ENCODE measurements at regions of chr6 and their contacts with region 1.

Region 1: DNA sequence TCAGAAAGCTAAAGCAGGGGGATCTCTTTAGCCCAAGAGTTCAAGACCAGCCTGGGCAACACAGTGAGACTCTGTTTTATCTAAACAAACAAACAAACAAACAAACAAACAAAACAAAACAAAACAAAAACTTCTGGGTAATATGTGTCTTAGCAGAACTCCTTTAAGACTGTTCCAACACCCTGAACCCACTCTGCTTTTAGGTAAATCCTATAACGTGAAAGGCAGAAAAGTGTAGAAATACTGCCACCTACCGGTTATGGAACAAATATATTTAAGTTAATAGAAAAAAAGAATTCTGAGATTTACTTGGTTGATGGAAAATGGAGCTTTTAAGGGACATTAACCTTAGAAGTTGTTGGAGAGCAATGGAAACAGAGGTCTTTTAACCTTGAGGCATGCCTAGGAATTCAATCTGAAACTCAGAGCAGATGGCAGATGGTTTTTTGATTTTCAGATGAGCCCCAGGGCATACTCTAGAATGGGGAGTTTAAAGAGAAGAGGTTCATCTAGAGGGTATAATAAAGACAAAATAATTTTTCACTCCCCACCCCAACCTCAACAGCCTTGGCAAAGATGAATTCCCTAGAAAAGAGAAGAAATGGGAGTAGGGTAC is 38.5 kb downstream of the SOD2 start:
- DNase-seq: no peak
- ATAC-seq: peak; percentile 32; the same call in 1 of the 2 replicates
- H3K4me3 Mint-ChIP-seq: no peak overlapping the region
- H3K27ac Mint-ChIP-seq: no peak overlapping the region
- H3K4me1 Mint-ChIP-seq: peaks cover 18% of the 10 kb centered on the region
- H3K27me3 Mint-ChIP-seq: no peaks in the 10 kb centered on the region
- CTCF ChIP-seq: peak; percentile 55

Region 2: DNA sequence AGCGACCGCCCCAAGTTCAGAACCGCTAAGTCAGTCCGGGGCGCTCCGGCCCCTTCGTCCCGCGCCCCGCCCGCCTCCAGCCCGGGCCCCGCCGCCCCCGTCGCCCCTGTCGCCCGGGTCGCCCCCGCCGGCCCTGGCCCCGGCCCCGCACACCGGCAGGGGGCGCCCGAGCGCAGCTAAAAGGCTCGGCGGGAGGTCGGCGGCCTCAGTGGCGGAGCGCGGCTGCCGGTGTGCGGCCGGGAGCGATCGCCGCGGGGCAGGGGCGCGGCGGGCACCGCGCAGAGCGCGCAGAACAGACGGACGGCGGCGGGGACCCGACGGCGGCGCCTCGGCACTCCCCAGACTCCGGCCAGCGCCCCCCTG is 485.4 kb before region 1 on chr6 and contains the start of gene FNDC1:
- CTCF ChIA-PET with region 1: interaction called, 25 read pairs
- POLR2A ChIA-PET with region 1: no interaction called
- DNase-seq: peak; percentile 63
- ATAC-seq: peak; percentile 47
- H3K4me3 Mint-ChIP-seq: peak within 1 kb of the TSS; percentile 77
- H3K27ac Mint-ChIP-seq: no peak within 1 kb of the TSS
- H3K4me1 Mint-ChIP-seq: peaks cover 15% of the 10 kb centered on the region
- H3K27me3 Mint-ChIP-seq: peaks cover 90% of the 10 kb centered on the region
- CTCF ChIP-seq: peak; percentile 27; the same call in 1 of the 2 replicates
- total RNA-seq, gene FNDC1: 0.23 to 0.44 TPM (median 0.34 TPM) in 3 replicates

Region 3: DNA sequence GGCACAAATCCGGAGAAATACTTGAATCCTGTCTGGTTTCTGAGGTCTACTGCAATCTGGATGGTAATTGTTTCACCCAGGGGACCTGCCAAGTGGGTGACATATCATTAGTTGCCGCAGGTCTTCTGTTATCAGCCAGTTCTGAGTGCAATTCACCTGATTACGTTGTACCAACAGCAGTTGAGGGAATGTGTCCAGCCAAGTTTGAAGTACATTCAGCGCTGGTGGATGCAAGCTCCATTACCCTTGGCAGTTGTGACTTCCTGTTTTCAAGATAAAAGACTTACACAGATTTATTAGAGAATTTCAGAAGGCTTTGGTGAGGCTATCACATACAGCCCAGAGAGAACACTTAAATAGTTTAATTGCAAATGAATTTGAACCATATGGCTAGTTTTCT is 442.6 kb before region 1 on chr6:
- CTCF ChIA-PET with region 1: interaction called, 23 read pairs
- POLR2A ChIA-PET with region 1: no interaction called
- DNase-seq: no peak
- ATAC-seq: no peak
- H3K4me3 Mint-ChIP-seq: no peak overlapping the region
- H3K27ac Mint-ChIP-seq: no peak overlapping the region
- H3K4me1 Mint-ChIP-seq: no peaks in the 10 kb centered on the region
- H3K27me3 Mint-ChIP-seq: no peaks in the 10 kb centered on the region
- CTCF ChIP-seq: no peak

Region 4: GRCh38 chr6:159463119-159463829 is 191.3 kb before region 1 on chr6:
- CTCF ChIA-PET with region 1: interaction called, 10 read pairs
- POLR2A ChIA-PET with region 1: no interaction called
- DNase-seq: no peak
- ATAC-seq: 0 out of 2 replicates have a peak, but pooled peaks have one; percentile 22
- H3K4me3 Mint-ChIP-seq: no peak overlapping the region
- H3K27ac Mint-ChIP-seq: no peak overlapping the region
- H3K4me1 Mint-ChIP-seq: peaks cover 10% of the 10 kb centered on the region
- H3K27me3 Mint-ChIP-seq: no peaks in the 10 kb centered on the region
- CTCF ChIP-seq: peak; percentile 41; the same call in 1 of the 2 replicates

Region 5: GRCh38 chr6:159620947-159621346 is 33.6 kb before region 1 on chr6:
- CTCF ChIA-PET with region 1: interaction called, 10 read pairs
- POLR2A ChIA-PET with region 1: no interaction called
- DNase-seq: no peak
- ATAC-seq: no peak
- H3K4me3 Mint-ChIP-seq: no peak overlapping the region
- H3K27ac Mint-ChIP-seq: no peak overlapping the region
- H3K4me1 Mint-ChIP-seq: no peaks in the 10 kb centered on the region
- H3K27me3 Mint-ChIP-seq: no peaks in the 10 kb centered on the region; the same call in 1 of the 2 replicates
- CTCF ChIP-seq: no peak

Measured in WTC11 (cell line).